Activated CD4-positive, alpha-beta memory T cell treated with anti-CD3 and anti-CD28 coated beads, Interleukin-2, amount 10 ng/mL, durations not matched to agents 7 days and 5 days (primary cell): ENCODE measurements at regions of chr1 and their contacts with region 1.

Region 1: GRCh38 chr1:204398217-204399081 is 13.2 kb downstream of the PPP1R15B start:
- DNase-seq: peak; percentile 55
- H3K4me3 Mint-ChIP-seq: no peak overlapping the region
- H3K27ac Mint-ChIP-seq: peak overlapping the region; percentile 31
- H3K4me1 Mint-ChIP-seq: peaks cover 7% of the 10 kb centered on the region
- H3K27me3 Mint-ChIP-seq: no peaks in the 10 kb centered on the region

Region 2: DNA sequence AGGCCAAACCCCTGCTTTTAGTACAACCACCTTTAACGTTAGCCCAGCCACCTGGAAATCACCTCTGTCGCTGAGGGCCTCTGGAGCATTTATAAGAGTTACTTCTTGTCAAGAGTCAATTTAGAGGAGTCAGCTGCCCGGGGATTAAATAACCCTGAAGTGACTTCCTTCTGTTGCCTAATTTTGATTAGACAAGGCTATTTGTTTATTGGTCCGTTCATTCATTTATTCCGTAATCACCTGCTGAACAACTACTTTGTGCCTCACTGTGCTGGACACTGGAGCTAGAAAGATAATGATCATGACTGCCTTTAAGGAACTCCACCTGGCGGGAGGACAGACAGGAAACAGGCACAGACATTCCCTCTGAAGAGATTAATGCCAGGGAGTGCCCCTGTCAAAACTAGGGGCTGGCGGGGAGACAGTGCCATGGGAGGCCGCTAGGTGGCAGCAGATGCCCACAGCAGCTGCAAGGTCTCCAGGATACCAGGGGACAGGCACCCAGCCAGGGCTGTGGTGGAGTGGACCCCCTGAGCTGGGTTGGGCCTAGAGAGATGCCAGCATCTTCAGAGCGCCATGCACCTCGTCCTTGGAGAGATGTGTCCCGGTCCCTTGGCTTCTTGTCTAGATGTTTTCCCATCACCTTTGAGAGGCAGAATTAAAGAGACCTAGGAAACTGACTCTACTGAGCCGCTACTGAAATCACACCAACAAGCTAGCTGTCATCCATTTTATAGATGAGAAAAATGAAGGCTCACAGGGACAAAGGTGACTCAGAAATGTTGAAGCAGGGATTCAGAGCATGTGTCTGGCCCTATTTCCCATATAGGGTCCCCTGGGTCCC is 236.0 kb before region 1 on chr1:
- CTCF ChIA-PET with region 1: interaction called, 11 read pairs
- POLR2A ChIA-PET with region 1: interaction called, 3 read pairs
- DNase-seq: peak; percentile 79
- H3K4me3 Mint-ChIP-seq: no peak overlapping the region
- H3K27ac Mint-ChIP-seq: no peak overlapping the region
- H3K4me1 Mint-ChIP-seq: no peaks in the 10 kb centered on the region
- H3K27me3 Mint-ChIP-seq: peaks cover 2% of the 10 kb centered on the region

Region 3: GRCh38 chr1:204377795-204378608 is 20.4 kb before region 1 on chr1:
- CTCF ChIA-PET with region 1: interaction called, 18 read pairs
- POLR2A ChIA-PET with region 1: no interaction called
- DNase-seq: peak; percentile 41
- H3K4me3 Mint-ChIP-seq: peak overlapping the region; percentile 70
- H3K27ac Mint-ChIP-seq: no peak overlapping the region
- H3K4me1 Mint-ChIP-seq: peaks cover 13% of the 10 kb centered on the region
- H3K27me3 Mint-ChIP-seq: peaks cover 43% of the 10 kb centered on the region

Region 4: DNA sequence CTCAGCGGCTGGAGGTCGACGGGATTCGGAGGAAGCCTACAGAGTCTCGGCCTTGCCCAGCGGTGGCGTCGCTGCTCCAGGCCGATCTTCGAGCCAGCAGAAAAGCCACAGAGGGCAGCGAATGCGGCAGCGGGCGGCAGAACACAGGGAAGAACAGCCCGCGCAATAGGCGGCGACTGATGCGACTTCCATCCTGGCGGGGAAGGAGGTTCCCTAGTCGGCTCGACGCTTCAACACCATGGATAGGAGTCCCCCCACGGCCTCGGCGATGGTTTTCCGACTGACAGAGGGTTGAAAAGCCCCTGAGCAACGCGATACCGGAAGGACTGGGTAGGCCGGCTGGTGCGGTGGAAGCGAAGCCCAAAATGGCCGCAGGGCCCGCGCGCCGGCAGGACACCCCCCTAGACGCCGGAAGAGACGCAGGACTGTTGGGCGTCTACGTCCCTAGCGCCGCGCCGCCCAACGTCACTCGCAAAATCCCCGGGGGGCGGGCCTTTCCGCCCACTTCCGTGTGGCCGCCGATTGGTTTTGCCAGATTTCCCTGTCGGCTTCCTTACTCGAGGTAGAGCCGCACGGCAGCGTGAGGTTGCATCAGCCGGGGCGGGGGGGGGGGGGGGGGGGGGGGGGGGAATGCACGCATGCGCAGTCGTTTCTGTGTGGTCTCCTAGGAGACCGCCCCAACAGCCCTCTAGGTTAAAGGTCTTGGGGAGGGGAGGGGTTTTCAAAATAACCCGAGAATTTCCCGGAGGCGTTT is 13.2 kb after region 1 on chr1 and contains the start of gene PPP1R15B:
- CTCF ChIA-PET with region 1: interaction called, 87 read pairs
- POLR2A ChIA-PET with region 1: interaction called, 14 read pairs
- DNase-seq: peak; percentile 98
- H3K4me3 Mint-ChIP-seq: peak within 1 kb of the TSS; percentile 98
- H3K27ac Mint-ChIP-seq: peak within 1 kb of the TSS; percentile 98
- H3K4me1 Mint-ChIP-seq: peaks cover 19% of the 10 kb centered on the region
- H3K27me3 Mint-ChIP-seq: no peaks in the 10 kb centered on the region
- total RNA-seq, gene PPP1R15B: 76.0 to 76.1 TPM

Region 5: DNA sequence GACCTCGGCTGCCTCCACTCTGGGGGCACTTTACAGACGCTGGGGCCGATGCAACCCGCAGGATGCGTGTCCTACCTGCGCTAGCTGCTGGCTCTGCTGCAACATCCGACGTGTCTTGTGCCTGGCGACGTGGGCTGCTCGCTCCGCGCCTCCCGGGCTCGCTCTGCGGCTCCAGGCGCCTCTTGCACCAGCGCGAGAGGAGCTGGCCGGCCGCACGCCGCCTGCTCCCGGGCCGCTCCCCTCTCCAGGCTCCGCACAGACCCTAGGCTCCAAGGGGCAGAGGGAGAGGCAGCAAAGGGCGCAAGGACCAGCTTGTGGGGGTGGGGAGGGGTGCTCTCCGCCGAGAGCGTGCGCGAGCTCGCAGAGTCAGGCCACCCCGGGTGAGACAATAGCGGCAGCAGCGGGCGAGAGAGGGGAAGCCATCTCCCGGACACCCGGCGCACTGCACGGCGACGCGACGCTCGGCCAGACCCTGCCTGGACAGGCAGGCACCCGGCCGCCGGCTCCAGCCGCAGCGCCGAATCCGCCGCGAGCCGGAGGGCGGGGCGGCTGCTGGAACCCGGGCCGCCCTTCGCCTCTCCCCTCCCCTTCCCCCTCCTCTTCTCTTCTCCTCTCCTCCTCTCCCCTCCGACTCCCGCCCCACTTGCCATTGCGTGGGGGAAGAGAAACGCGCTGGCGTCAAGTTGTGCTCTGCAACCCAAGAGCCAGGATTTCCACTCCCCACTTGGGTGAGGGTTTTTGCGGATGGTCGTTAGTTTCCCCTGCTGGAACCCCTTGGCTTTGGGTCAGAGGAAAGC is 96.0 kb after region 1 on chr1 and contains the start of gene PIK3C2B:
- CTCF ChIA-PET with region 1: interaction called, 10 read pairs
- POLR2A ChIA-PET with region 1: no interaction called
- DNase-seq: peak; percentile 77
- H3K4me3 Mint-ChIP-seq: peak within 1 kb of the TSS; percentile 88
- H3K27ac Mint-ChIP-seq: peak within 1 kb of the TSS; percentile 84
- H3K4me1 Mint-ChIP-seq: peaks cover 58% of the 10 kb centered on the region
- H3K27me3 Mint-ChIP-seq: no peaks in the 10 kb centered on the region
- total RNA-seq, gene PIK3C2B: 31.0 to 32.0 TPM

Region 6: DNA sequence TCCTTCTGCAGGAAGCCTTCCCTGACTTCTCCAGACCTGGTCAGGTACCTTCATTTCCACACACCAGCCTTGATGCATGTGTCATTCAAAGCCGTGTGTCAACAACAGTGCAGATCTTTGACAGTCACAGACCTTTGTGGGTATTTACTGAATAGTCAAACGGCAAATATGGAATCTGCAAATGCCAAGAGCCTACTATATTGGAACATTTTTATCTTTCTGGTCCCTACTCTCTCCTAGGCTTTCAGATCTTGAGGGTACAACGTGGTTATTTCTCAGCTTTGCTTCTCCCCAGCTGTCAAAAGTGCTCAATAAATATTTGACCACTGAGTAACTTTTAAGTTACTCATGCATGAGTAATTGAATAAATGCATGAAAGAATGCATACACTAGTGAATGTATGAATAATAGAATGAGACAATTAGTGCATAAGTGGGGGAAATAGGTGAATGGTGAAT is 193.2 kb after region 1 on chr1:
- CTCF ChIA-PET with region 1: no interaction called
- POLR2A ChIA-PET with region 1: no interaction called
- DNase-seq: no peak
- H3K4me3 Mint-ChIP-seq: no peak overlapping the region
- H3K27ac Mint-ChIP-seq: no peak overlapping the region
- H3K4me1 Mint-ChIP-seq: no peaks in the 10 kb centered on the region
- H3K27me3 Mint-ChIP-seq: no peaks in the 10 kb centered on the region